Activated CD8-positive, alpha-beta memory T cell treated with anti-CD3 and anti-CD28 coated beads, Interleukin-2, amount 10 ng/mL, durations not matched to agents 7 days and 5 days (primary cell): ENCODE measurements at regions of chr22 and their contacts with region 1.

Region 1: DNA sequence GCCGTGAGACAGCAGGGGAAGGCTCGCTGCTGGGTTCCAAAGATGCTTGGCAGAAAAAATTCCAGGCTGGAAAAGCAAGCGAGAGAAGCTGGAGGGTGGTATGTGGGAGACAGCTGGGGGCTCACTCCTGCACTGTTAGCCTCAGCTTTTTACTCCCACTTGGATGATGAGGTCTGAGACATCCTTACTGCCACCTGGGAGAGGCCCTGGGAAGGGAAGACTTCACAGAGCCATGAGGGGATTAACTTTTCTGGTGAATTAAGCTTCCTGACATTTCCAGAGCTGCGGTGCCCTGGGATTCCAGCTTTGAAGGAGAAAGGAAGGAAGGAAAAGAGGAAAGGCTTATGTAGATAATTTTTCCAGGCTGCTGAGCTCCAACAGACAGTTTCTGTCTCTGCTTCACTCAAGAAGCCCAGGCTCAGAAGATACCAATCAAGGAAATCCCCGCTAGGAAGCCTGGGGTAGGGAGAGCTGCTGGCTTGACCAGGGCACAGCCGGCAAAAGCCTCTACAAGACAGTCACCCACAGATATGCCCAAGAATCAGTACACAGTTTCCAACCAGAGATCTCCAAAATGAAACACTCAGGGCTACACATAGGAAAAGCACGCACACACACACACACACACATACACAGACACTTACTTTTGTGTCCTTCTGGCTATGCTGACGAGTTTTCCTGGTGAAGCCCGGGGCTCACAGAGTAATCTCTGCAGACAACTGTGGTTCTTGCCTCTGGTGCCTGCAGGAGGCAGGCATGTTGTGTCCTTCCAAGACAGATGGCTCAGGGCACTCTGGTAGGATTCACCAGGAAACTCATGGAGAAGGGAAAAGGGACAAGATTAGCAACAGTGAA is 907 bp downstream of the MCHR1 start:
- DNase-seq: no peak
- ATAC-seq: no peak
- H3K4me3 Mint-ChIP-seq: no peak overlapping the region
- H3K27ac Mint-ChIP-seq: no peak overlapping the region
- H3K4me1 Mint-ChIP-seq: peaks cover 31% of the 10 kb centered on the region
- H3K27me3 Mint-ChIP-seq: peaks cover 16% of the 10 kb centered on the region

Region 2: GRCh38 chr22:40436505-40437451 is 243.4 kb before region 1 on chr22:
- CTCF ChIA-PET with region 1: interaction called, 12 read pairs
- DNase-seq: peak; percentile 54
- ATAC-seq: peak; percentile 71
- H3K4me3 Mint-ChIP-seq: peak overlapping the region; percentile 10
- H3K27ac Mint-ChIP-seq: peak overlapping the region; percentile 81
- H3K4me1 Mint-ChIP-seq: peaks cover 48% of the 10 kb centered on the region
- H3K27me3 Mint-ChIP-seq: no peaks in the 10 kb centered on the region

Region 3: GRCh38 chr22:40668611-40669411 is 11.4 kb before region 1 on chr22:
- CTCF ChIA-PET with region 1: interaction called, 14 read pairs
- DNase-seq: peak; percentile 48
- ATAC-seq: peak; percentile 84
- H3K4me3 Mint-ChIP-seq: no peak overlapping the region
- H3K27ac Mint-ChIP-seq: peak overlapping the region; percentile 81
- H3K4me1 Mint-ChIP-seq: peaks cover 24% of the 10 kb centered on the region
- H3K27me3 Mint-ChIP-seq: no peaks in the 10 kb centered on the region

Region 4: DNA sequence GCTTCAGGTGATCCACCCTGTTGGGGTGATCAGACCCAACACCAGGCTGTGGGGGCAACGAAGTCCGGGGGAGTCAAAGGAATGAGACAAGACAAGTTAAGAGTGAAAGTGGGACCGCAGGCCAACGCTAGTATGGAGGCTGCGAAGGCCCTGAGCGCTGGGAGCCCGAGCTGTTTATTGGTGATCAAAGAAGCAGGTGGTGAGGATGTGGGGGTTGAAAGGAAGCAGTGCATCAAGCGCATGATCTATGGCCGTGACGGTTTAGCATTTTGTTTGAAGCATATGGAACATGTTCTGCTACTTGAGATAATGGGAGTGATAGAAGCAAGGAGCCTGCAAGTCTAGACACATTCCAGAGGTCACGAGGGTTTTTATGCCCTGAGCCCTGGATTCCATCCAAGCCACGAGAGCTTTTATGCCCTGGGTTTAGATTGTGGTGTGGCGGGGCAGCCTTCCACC is 48.6 kb after region 1 on chr22:
- CTCF ChIA-PET with region 1: interaction called, 11 read pairs
- DNase-seq: peak; percentile 78
- ATAC-seq: peak; percentile 47
- H3K4me3 Mint-ChIP-seq: peak overlapping the region; percentile 20
- H3K27ac Mint-ChIP-seq: peak overlapping the region; percentile 87
- H3K4me1 Mint-ChIP-seq: peaks cover 43% of the 10 kb centered on the region
- H3K27me3 Mint-ChIP-seq: no peaks in the 10 kb centered on the region

Region 5: GRCh38 chr22:40818747-40819598 is 138.8 kb after region 1 on chr22 and contains the start of gene SLC25A17:
- CTCF ChIA-PET with region 1: interaction called, 11 read pairs
- DNase-seq: peak; percentile 92
- ATAC-seq: peak; percentile 95
- H3K4me3 Mint-ChIP-seq: peak within 1 kb of the TSS; percentile 89
- H3K27ac Mint-ChIP-seq: peak within 1 kb of the TSS; percentile 91
- H3K4me1 Mint-ChIP-seq: peaks cover 31% of the 10 kb centered on the region
- H3K27me3 Mint-ChIP-seq: no peaks in the 10 kb centered on the region
- total RNA-seq, gene SLC25A17: 19.0 to 24.5 TPM

Region 6: GRCh38 chr22:40922484-40923303 is 242.5 kb after region 1 on chr22:
- CTCF ChIA-PET with region 1: interaction called, 18 read pairs
- DNase-seq: no peak
- ATAC-seq: peak; percentile 86
- H3K4me3 Mint-ChIP-seq: no peak overlapping the region
- H3K27ac Mint-ChIP-seq: peak overlapping the region; percentile 69
- H3K4me1 Mint-ChIP-seq: peaks cover 4% of the 10 kb centered on the region
- H3K27me3 Mint-ChIP-seq: no peaks in the 10 kb centered on the region